ENCODE measurements at regions of chr3 and their contacts with region 1.

Region 1: DNA sequence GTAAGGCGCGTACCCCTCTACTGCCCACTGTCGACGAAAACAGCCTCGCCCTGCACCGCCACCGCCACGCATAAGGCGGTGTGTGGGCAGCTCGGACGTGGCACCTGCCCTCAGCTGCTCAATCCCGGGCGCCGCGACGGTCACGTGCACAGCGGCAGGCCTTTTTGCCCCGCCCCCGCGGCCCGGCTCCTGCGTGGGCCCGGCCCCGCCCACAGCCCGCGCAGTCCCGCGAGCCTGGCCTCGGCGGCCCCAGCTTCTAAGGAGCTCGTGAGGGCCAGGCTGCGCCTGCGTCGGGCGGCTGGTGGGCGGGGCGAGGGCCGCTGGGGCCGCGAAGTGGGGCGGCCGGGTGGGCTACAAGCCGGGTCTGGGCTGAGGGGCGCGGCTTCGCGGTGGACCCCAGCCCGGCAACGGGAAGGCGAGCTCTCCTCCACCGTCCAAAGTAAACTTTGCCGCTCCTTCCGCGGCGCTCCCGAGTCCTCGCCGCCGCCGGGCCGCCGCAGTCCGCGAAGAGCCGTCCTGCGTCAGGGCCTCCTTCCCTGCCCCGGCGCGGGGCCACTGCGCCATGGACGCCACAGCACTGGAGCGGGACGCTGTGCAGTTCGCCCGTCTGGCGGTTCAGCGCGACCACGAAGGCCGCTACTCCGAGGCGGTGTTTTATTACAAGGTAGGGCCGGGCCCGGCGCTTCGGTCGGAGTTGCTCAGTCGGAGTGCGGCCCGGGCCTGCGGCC is at the start of gene CAPN7:
- DNase-seq: peak; percentile 94
- ATAC-seq: peak; percentile 94
- H3K4me3 Mint-ChIP-seq: peak within 1 kb of the TSS; percentile 83
- H3K27ac Mint-ChIP-seq: peak within 1 kb of the TSS; percentile 86
- H3K4me1 Mint-ChIP-seq: peaks cover 29% of the 10 kb centered on the region
- H3K27me3 Mint-ChIP-seq: no peaks in the 10 kb centered on the region
- total RNA-seq, gene CAPN7: 28.3 to 29.5 TPM

Region 2: DNA sequence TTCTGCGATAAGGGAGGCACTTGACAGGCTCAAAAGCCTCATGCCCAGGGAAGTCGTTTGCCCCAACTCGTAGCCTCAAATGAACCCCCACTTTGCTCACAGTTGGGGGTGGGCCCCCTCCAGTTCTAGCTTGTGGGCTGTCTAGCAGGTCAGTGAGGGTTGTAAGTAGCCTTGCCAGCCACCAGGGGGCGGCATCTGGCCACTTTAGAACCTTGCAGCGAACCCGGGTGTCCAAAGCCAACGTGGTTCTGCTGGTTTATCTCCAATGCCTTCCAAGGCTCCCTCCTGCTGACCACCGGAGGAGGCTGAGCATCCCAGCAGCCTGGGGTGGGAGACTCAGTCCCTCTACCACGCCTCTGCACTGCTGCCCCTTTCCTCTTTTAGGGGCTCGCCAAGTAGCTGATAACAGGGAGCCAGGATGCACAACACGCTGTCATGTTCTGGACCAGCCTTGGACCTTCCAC is 98.0 kb before region 1 on chr3:
- CTCF ChIA-PET with region 1: interaction called, 53 read pairs
- POLR2A ChIA-PET with region 1: no interaction called
- DNase-seq: peak; percentile 81
- ATAC-seq: peak; percentile 94
- H3K4me3 Mint-ChIP-seq: no peak overlapping the region
- H3K27ac Mint-ChIP-seq: no peak overlapping the region
- H3K4me1 Mint-ChIP-seq: peaks cover 2% of the 10 kb centered on the region
- H3K27me3 Mint-ChIP-seq: peaks cover 7% of the 10 kb centered on the region

Region 3: DNA sequence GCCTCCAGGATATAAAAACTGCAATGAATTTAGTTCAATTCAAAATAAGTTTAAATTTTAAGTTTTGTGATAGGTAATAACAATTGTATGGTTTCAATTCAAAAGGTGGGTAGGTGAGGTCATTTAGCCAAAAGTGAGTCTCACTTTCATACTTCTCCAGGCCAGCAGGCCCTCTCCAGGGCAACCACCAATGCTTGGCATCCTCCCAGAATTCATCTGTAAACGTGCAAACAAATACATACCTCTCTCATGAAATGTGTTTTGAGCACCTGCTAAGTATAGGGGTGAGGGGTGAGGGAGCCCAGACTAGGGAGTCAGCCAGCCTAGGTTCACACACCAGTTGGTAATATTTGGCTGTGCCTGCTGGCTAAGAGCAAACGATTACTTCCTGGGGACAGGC is 85.1 kb before region 1 on chr3:
- CTCF ChIA-PET with region 1: interaction called, 16 read pairs
- POLR2A ChIA-PET with region 1: no interaction called
- DNase-seq: no peak
- ATAC-seq: no peak
- H3K4me3 Mint-ChIP-seq: no peak overlapping the region
- H3K27ac Mint-ChIP-seq: no peak overlapping the region
- H3K4me1 Mint-ChIP-seq: peaks cover 19% of the 10 kb centered on the region
- H3K27me3 Mint-ChIP-seq: no peaks in the 10 kb centered on the region

Region 4: DNA sequence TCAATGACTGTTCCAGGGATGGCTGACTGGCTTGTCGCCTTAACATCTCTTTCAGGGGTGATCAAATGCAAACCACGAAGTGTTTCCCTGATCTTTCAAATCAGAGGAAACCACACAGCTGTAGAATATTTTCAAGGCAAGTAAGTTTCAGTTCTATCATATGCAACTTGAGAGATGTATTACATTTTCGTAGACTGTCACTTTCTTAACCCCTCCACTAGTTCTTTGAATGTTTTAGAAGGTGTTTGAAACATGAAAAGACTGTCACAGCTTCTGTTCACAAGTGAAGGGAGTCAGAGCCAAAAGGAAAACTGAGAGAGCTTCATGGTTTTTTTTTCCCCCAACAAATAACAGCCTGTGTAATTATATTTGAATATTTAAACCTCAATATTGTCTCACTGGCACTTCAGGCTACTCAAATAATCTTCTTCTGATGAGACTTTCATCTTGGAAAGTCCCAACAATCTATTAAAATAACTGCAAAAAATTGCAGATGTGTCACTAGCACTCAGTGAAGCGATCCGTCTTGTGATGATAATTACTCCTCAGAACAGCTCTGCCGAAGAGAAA is 26.0 kb before region 1 on chr3:
- CTCF ChIA-PET with region 1: interaction called, 10 read pairs
- POLR2A ChIA-PET with region 1: no interaction called
- DNase-seq: no peak
- ATAC-seq: peak; percentile 33
- H3K4me3 Mint-ChIP-seq: no peak overlapping the region
- H3K27ac Mint-ChIP-seq: no peak overlapping the region
- H3K4me1 Mint-ChIP-seq: peaks cover 14% of the 10 kb centered on the region
- H3K27me3 Mint-ChIP-seq: peaks cover 27% of the 10 kb centered on the region

Region 5: GRCh38 chr3:15377961-15378791 is 172.1 kb after region 1 on chr3:
- CTCF ChIA-PET with region 1: interaction called, 17 read pairs
- POLR2A ChIA-PET with region 1: no interaction called
- DNase-seq: peak; percentile 97
- ATAC-seq: peak; percentile 94
- H3K4me3 Mint-ChIP-seq: no peak overlapping the region
- H3K27ac Mint-ChIP-seq: peak overlapping the region; percentile 83
- H3K4me1 Mint-ChIP-seq: peaks cover 10% of the 10 kb centered on the region
- H3K27me3 Mint-ChIP-seq: peaks cover 7% of the 10 kb centered on the region

Region 6: GRCh38 chr3:15405448-15406050 is 199.5 kb after region 1 on chr3:
- CTCF ChIA-PET with region 1: interaction called, 45 read pairs
- POLR2A ChIA-PET with region 1: interaction called, 3 read pairs
- DNase-seq: peak; percentile 52
- ATAC-seq: peak; percentile 81
- H3K4me3 Mint-ChIP-seq: no peak overlapping the region
- H3K27ac Mint-ChIP-seq: no peak overlapping the region
- H3K4me1 Mint-ChIP-seq: peaks cover 12% of the 10 kb centered on the region
- H3K27me3 Mint-ChIP-seq: peaks cover 1% of the 10 kb centered on the region